T-cell (primary cell): ENCODE measurements at regions of chr6 and their contacts with region 1.

Region 1: DNA sequence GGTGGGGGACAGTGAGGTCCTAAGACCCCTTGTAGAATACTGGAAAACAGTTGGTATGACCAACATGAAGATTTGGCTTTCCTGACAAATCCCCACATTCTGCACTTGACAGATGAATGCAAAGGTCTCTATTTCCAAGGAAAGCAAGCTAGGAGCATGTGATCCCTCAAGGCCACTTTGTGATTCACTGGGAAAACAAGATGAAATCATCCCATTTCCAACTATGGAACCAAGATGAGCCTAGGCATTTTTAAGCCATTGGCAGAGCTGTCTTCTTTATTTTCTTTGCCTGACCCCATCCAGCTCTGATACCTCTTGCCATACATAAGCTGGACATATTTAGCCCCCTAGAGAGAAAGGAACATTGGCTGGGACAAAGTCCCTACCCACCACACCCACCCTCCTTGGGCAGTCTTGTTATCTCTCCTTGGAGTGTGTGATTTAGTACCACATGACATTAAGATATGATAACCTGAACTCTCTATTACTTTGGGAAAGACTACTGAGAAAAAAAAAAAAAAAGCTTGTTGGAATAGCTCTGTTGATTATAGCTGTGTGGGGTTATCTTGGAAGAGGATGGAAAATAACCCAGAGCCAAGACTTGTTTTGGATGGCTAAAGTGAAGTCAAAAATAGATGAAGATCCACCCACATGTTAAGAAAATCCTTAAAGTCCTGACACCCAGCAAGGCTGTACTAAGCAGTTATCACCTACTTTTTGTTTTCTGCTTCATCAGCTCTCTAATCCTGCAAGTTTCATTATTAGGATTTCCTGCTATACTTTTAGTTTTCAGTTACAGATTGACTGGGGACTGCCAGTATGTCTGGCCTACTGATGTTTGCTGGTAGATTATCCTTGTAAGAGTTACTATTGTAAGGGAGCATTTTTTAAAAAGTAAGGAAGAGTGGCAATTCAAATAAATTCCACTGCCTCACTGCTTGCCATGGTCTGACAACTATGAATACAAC is 90.1 kb upstream of the PREP start:
- DNase-seq: no peak
- ATAC-seq: no peak
- H3K4me3 ChIP-seq: no peak overlapping the region
- H3K4me3 Mint-ChIP-seq: no peak overlapping the region
- H3K27ac ChIP-seq: no peak overlapping the region
- H3K27ac Mint-ChIP-seq: no peak overlapping the region
- H3K4me1 ChIP-seq: no peaks in the 10 kb centered on the region
- H3K4me1 Mint-ChIP-seq: peaks cover 2 to 10% (median 2%) of the 10 kb centered on the region in 3 donors
- H3K27me3 ChIP-seq: no peaks in the 10 kb centered on the region
- H3K27me3 Mint-ChIP-seq: no peaks in the 10 kb centered on the region

Region 2: GRCh38 chr6:105374010-105374420 is 119.0 kb before region 1 on chr6:
- CTCF ChIA-PET with region 1: no interaction called
- POLR2A ChIA-PET with region 1: interaction called in 1 of 2 experiments, 10 read pairs
- DNase-seq: no peak
- ATAC-seq: no peak
- H3K4me3 ChIP-seq: no peak overlapping the region
- H3K4me3 Mint-ChIP-seq: no peak overlapping the region
- H3K27ac ChIP-seq: no peak overlapping the region
- H3K27ac Mint-ChIP-seq: no peak overlapping the region
- H3K4me1 ChIP-seq: no peaks in the 10 kb centered on the region
- H3K4me1 Mint-ChIP-seq: peaks cover 9 to 10% (median 10%) of the 10 kb centered on the region in 3 donors
- H3K27me3 ChIP-seq: no peaks in the 10 kb centered on the region
- H3K27me3 Mint-ChIP-seq: no peaks in the 10 kb centered on the region

Region 3: GRCh38 chr6:105474234-105474633 is 18.8 kb before region 1 on chr6:
- CTCF ChIA-PET with region 1: no interaction called
- POLR2A ChIA-PET with region 1: no interaction called
- DNase-seq: no peak
- ATAC-seq: no peak
- H3K4me3 ChIP-seq: no peak overlapping the region
- H3K4me3 Mint-ChIP-seq: no peak overlapping the region
- H3K27ac ChIP-seq: no peak overlapping the region
- H3K27ac Mint-ChIP-seq: no peak overlapping the region
- H3K4me1 ChIP-seq: no peaks in the 10 kb centered on the region
- H3K4me1 Mint-ChIP-seq: no peaks in the 10 kb centered on the region
- H3K27me3 ChIP-seq: no peaks in the 10 kb centered on the region
- H3K27me3 Mint-ChIP-seq: peaks cover 13 to 20% of the 10 kb centered on the region in 2 donors

Region 4: DNA sequence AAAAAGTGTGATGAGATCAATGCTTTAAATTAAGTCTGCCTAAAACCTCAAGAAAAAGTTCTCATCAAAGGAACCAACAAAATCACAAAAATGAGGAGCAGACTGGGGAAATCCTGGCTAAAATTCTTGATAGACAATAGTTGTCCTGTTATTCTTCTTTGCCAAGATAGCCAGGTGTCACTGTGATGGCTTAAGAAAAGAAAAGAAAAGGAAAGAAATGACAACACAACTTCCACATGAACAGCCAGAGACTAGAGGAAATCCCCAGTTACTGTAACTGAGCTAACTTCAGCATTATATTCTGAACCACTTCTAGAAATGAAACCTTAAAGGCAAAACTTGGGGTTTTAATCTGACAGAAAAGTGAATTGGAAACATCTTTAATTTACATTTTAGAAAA is 1351.9 kb after region 1 on chr6:
- CTCF ChIA-PET with region 1: no interaction called
- POLR2A ChIA-PET with region 1: no interaction called
- DNase-seq: no peak
- ATAC-seq: no peak
- H3K4me3 ChIP-seq: no peak overlapping the region
- H3K4me3 Mint-ChIP-seq: no peak overlapping the region
- H3K27ac ChIP-seq: no peak overlapping the region
- H3K27ac Mint-ChIP-seq: no peak overlapping the region
- H3K4me1 ChIP-seq: no peaks in the 10 kb centered on the region
- H3K4me1 Mint-ChIP-seq: no peaks in the 10 kb centered on the region
- H3K27me3 ChIP-seq: peaks cover 0 to 5% of the 10 kb centered on the region in 2 experiments
- H3K27me3 Mint-ChIP-seq: peaks cover 18 to 20% of the 10 kb centered on the region in 2 donors